ENCODE measurements at regions of chr3 and their contacts with region 1.

Region 1: GRCh38 chr3:125552401-125552800 is 32.4 kb upstream of the SNX4 start:
- DNase-seq: no peak
- ATAC-seq: no peak
- H3K4me3 Mint-ChIP-seq: no peak overlapping the region
- H3K27ac Mint-ChIP-seq: no peak overlapping the region
- H3K4me1 Mint-ChIP-seq: peaks cover 21% of the 10 kb centered on the region
- H3K27me3 Mint-ChIP-seq: no peaks in the 10 kb centered on the region

Region 2: DNA sequence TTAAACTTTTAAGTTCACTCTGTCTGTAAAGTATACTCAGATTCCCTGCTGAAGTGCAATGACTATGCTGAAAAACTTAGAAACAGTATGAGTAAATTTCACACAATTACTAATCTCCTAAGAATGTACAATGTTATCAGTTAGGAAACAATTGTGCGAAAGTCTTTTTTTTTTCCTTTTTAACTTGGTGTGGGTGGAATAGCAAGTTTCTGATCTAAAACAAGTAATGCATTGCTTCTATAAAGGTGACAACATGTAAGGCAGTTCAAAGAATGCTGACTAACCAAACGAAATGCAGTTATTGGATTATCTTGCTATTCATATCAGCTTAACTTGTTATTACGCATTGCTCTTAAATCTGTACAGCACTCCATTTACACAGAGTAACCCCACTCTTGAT is 320.5 kb before region 1 on chr3:
- CTCF ChIA-PET with region 1: no interaction called
- POLR2A ChIA-PET with region 1: no interaction called
- intact Hi-C with region 1: loop called in 1 of 2 experiments (anchors 2 kb)
- DNase-seq: no peak
- ATAC-seq: peak; percentile 92
- H3K4me3 Mint-ChIP-seq: no peak overlapping the region
- H3K27ac Mint-ChIP-seq: peak overlapping the region; percentile 82
- H3K4me1 Mint-ChIP-seq: peaks cover 22% of the 10 kb centered on the region
- H3K27me3 Mint-ChIP-seq: no peaks in the 10 kb centered on the region

Region 3: GRCh38 chr3:125257536-125257935 is 294.9 kb before region 1 on chr3:
- CTCF ChIA-PET with region 1: no interaction called
- POLR2A ChIA-PET with region 1: no interaction called
- intact Hi-C with region 1: no loop called
- DNase-seq: no peak
- ATAC-seq: no peak
- H3K4me3 Mint-ChIP-seq: no peak overlapping the region
- H3K27ac Mint-ChIP-seq: no peak overlapping the region
- H3K4me1 Mint-ChIP-seq: peaks cover 8% of the 10 kb centered on the region
- H3K27me3 Mint-ChIP-seq: no peaks in the 10 kb centered on the region

Region 4: GRCh38 chr3:125512135-125512920 is 40.1 kb before region 1 on chr3:
- CTCF ChIA-PET with region 1: interaction called, 3 read pairs
- POLR2A ChIA-PET with region 1: no interaction called
- intact Hi-C with region 1: loop called (anchors 1 to 5 kb)
- DNase-seq: peak; percentile 64
- ATAC-seq: peak; percentile 92
- H3K4me3 Mint-ChIP-seq: no peak overlapping the region
- H3K27ac Mint-ChIP-seq: peak overlapping the region; percentile 67
- H3K4me1 Mint-ChIP-seq: peaks cover 49% of the 10 kb centered on the region
- H3K27me3 Mint-ChIP-seq: no peaks in the 10 kb centered on the region

Region 5: DNA sequence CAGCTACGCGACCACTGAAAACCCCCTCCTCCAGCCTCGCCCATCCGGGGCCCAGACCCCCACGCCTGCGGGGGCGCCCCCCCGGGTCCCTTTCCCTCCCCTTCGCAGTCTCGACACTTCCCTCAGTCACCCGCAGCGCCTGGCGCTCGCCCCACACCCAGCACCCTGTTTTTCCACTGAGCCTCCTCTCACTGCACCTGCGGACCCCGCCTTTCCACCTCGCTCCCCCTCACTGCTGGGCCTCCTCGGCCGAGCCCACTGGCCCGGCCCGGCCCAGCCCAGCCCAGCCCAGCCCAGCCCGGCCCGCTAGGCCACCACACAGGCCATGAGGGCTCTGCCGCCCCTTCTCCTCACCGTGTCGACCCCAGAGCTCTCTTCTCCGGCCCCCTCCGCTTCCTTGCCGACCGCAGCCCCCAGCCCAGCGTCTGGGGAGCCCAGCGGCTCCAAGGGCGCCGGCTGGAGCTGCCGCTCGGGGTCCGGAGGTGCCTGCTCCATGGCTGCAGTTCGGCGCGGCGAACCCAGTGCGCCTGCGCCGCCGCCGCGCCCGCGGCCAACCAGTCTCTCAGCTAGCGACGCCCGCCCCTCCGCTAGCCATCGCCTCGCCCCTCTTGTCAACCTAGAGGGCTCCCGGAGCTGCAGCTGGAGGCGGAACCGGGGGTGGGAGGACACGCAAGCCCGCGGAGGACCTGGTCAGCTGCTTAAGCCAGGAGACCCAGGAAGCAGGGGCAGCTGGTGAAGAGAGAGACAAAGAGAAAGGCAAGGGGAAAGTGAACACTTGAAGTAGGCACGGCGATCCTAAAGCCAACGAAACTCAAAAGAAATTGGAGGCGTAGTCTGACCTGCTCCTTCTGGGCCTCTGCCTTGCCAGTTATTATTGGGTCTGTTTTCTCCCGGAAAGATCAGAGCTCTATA is 32.5 kb before region 1 on chr3 and contains the start of gene SNX4:
- CTCF ChIA-PET with region 1: no interaction called
- POLR2A ChIA-PET with region 1: no interaction called
- intact Hi-C with region 1: loop called in 1 of 2 experiments (anchors 1 kb)
- DNase-seq: peak; percentile 93
- ATAC-seq: peak; percentile 99
- H3K4me3 Mint-ChIP-seq: peak within 1 kb of the TSS; percentile 85
- H3K27ac Mint-ChIP-seq: peak within 1 kb of the TSS; percentile 93
- H3K4me1 Mint-ChIP-seq: peaks cover 37% of the 10 kb centered on the region
- H3K27me3 Mint-ChIP-seq: no peaks in the 10 kb centered on the region
- total RNA-seq, gene SNX4: 36.2 to 36.3 TPM

Region 6: DNA sequence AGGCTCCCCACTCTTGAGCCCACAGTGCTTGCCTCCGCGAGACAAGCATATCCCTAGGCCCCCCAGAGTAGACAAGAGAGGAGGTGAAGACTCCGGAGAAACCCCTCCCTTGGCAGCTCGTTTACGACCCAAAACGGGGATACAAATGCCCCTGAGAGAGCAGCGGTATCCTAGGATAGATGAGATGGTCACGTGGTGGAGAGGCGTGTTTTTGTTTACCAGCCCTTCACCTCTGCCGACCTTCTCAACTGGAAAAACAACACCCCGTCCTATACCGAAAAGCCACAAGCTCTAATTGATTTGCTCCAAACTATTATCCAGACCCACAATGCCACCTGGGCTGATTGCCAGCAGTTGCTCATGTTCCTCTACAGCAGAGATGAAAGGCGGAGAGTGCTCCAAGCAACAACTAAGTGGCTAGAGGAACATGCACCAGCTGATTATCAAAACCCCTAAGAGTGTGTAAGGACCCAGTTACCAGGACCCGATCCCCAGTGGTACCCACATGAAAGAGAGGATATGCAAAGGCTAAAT is 142.4 kb after region 1 on chr3:
- CTCF ChIA-PET with region 1: no interaction called
- POLR2A ChIA-PET with region 1: no interaction called
- intact Hi-C with region 1: no loop called
- DNase-seq: no peak
- ATAC-seq: no peak
- H3K4me3 Mint-ChIP-seq: no peak overlapping the region
- H3K27ac Mint-ChIP-seq: no peak overlapping the region
- H3K4me1 Mint-ChIP-seq: peaks cover 3% of the 10 kb centered on the region
- H3K27me3 Mint-ChIP-seq: peaks cover 3% of the 10 kb centered on the region